ENCODE measurements at regions of chr6 and their contacts with region 1.

Region 1: GRCh38 chr6:154995284-154996015 is at the start of gene TIAM2:
- DNase-seq: peak in 1 of 2 experiments; percentile 49
- H3K4me3 ChIP-seq: peak within 1 kb of the TSS; percentile 87
- H3K4me3 Mint-ChIP-seq: peak within 1 kb of the TSS; percentile 67
- H3K27ac Mint-ChIP-seq: no peak within 1 kb of the TSS
- H3K4me1 ChIP-seq: peaks cover 28% of the 10 kb centered on the region
- H3K4me1 Mint-ChIP-seq: peaks cover 13% of the 10 kb centered on the region
- H3K27me3 ChIP-seq: no peaks in the 10 kb centered on the region
- H3K27me3 Mint-ChIP-seq: no peaks in the 10 kb centered on the region
- CTCF ChIP-seq: no peak
- total RNA-seq, gene TIAM2: 3.8 and 5.1 TPM in 2 replicates

Region 2: GRCh38 chr6:154928325-154928922 is 67.0 kb before region 1 on chr6:
- CTCF ChIA-PET with region 1: no interaction called
- POLR2A ChIA-PET with region 1: no interaction called
- intact Hi-C with region 1: loop called (anchors 2 kb)
- DNase-seq: peak; percentile 47 to 71
- H3K4me3 ChIP-seq: no peak overlapping the region
- H3K4me3 Mint-ChIP-seq: no peak overlapping the region
- H3K27ac Mint-ChIP-seq: no peak overlapping the region
- H3K4me1 ChIP-seq: peaks cover 25% of the 10 kb centered on the region
- H3K4me1 Mint-ChIP-seq: peaks cover 21% of the 10 kb centered on the region
- H3K27me3 ChIP-seq: no peaks in the 10 kb centered on the region
- H3K27me3 Mint-ChIP-seq: no peaks in the 10 kb centered on the region
- CTCF ChIP-seq: peak; percentile 74 to 77

Region 3: DNA sequence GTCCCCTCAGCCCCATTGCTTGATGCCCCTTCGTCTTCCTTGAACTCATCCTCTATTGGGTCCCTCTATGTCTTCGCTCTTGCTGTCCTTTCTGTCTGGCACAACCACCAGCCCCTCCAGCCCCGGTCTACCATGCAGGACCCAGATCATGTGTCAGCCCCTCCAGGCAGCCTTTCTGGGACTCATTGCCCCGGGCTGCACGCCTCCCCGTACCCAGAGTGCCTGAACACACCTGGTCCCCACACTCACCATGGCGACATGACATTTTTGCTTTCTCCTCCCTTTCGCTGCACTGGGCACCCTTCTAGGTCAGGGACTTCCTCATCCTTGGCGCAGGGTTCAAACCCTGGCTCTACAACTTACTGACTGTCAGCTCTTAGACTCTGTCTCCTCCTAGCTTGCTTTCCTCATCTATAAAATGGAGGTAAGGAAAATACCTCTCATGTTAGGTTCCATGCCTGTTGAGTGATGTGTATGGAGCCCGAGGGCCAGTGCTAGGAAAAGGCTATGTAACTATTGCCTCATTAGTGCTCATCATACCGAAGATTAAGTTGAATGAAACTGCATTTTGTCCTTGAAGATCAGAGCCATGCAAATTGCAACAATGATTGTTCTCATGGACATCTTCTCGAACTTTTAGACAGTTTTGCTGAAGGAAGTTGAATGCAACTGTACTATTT is 50.1 kb before region 1 on chr6:
- CTCF ChIA-PET with region 1: no interaction called
- POLR2A ChIA-PET with region 1: no interaction called
- intact Hi-C with region 1: no loop called
- DNase-seq: no peak
- H3K4me3 ChIP-seq: no peak overlapping the region
- H3K4me3 Mint-ChIP-seq: no peak overlapping the region
- H3K27ac Mint-ChIP-seq: no peak overlapping the region
- H3K4me1 ChIP-seq: no peaks in the 10 kb centered on the region
- H3K4me1 Mint-ChIP-seq: no peaks in the 10 kb centered on the region
- H3K27me3 ChIP-seq: no peaks in the 10 kb centered on the region
- H3K27me3 Mint-ChIP-seq: no peaks in the 10 kb centered on the region
- CTCF ChIP-seq: no peak

Region 4: DNA sequence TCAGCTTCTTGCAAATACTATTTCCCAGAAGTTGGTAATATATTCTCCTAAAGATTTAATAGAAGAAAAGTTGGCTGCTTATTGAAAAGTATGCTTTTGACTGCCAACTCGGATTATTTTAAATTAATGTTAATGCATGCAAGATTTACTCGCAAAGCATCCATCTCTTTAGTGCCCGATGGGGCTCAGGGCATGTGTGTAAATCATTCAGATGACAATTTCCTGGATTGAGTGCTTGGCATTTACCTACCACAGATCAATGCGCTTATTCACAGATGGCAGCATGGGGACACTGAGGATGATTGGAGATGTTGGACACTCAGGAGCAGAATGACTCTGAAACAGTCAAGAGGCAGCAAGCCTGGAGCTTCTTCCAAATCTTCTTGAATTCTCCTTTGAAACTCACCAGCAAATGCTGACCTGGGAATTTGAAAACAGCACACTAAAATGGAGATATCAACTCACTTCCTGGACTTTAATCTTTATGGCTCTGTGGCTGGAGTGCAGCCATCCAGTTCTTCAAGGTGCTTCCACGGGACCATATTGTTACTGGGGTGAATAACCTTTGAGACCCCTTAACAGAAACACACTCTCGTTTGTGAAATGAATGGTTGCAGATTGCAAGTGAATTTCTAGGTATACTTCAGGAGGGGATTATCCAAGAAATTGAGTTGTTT is 34.5 kb before region 1 on chr6:
- CTCF ChIA-PET with region 1: no interaction called
- POLR2A ChIA-PET with region 1: no interaction called
- intact Hi-C with region 1: loop called (anchors 1 kb)
- DNase-seq: no peak
- H3K4me3 ChIP-seq: no peak overlapping the region
- H3K4me3 Mint-ChIP-seq: no peak overlapping the region
- H3K27ac Mint-ChIP-seq: peak overlapping the region; percentile 46
- H3K4me1 ChIP-seq: peaks cover 37% of the 10 kb centered on the region
- H3K4me1 Mint-ChIP-seq: peaks cover 18% of the 10 kb centered on the region
- H3K27me3 ChIP-seq: no peaks in the 10 kb centered on the region
- H3K27me3 Mint-ChIP-seq: no peaks in the 10 kb centered on the region
- CTCF ChIP-seq: no peak

Region 5: DNA sequence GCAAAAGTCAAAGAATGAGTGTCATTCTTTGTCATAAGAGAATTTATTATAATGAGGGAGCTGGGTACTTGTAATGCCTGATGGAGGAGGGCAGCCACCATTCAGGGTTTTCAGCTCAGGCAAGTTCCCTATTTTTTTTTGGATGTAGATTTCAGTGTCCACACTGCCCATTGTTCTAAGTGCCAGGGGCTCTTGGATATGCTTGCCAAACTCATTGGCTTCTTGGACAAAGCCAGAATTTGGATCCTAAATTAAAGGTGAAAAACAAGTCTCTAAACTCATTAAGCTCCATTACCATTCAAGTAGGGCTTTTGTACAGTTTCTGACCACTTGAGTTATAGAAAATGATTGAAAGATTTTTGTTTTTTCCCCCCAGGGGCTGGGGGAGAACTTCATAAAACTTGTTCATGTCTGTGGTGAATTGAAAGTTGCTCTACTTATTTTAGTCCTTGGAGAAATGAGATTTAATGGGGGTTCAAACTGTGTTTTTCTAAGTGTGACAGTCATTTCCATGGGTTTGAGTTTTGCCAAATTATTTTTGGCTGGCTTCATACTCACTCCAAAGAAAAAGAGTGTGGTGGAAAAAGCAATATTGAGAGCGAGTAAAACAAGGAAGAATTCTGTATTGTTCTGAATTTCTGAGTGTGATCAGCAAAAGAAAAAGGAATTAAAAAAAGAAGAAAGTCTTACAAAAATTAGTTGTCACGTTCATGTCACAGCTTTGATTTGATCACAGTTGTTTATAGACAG is 45.6 kb after region 1 on chr6:
- CTCF ChIA-PET with region 1: no interaction called
- POLR2A ChIA-PET with region 1: interaction called, 18 read pairs
- intact Hi-C with region 1: no loop called
- DNase-seq: no peak
- H3K4me3 ChIP-seq: no peak overlapping the region
- H3K4me3 Mint-ChIP-seq: no peak overlapping the region
- H3K27ac Mint-ChIP-seq: no peak overlapping the region
- H3K4me1 ChIP-seq: no peaks in the 10 kb centered on the region
- H3K4me1 Mint-ChIP-seq: no peaks in the 10 kb centered on the region
- H3K27me3 ChIP-seq: no peaks in the 10 kb centered on the region
- H3K27me3 Mint-ChIP-seq: no peaks in the 10 kb centered on the region
- CTCF ChIP-seq: no peak

Region 6: GRCh38 chr6:155085582-155086257 is 90.3 kb after region 1 on chr6:
- CTCF ChIA-PET with region 1: no interaction called
- POLR2A ChIA-PET with region 1: no interaction called
- intact Hi-C with region 1: loop called (anchors 5 kb)
- DNase-seq: peak; percentile 64 to 83
- H3K4me3 ChIP-seq: no peak overlapping the region
- H3K4me3 Mint-ChIP-seq: peak overlapping the region; percentile 27
- H3K27ac Mint-ChIP-seq: peak overlapping the region; percentile 87
- H3K4me1 ChIP-seq: peaks cover 23% of the 10 kb centered on the region
- H3K4me1 Mint-ChIP-seq: peaks cover 11% of the 10 kb centered on the region
- H3K27me3 ChIP-seq: no peaks in the 10 kb centered on the region
- H3K27me3 Mint-ChIP-seq: no peaks in the 10 kb centered on the region
- CTCF ChIP-seq: no peak

Region 7: DNA sequence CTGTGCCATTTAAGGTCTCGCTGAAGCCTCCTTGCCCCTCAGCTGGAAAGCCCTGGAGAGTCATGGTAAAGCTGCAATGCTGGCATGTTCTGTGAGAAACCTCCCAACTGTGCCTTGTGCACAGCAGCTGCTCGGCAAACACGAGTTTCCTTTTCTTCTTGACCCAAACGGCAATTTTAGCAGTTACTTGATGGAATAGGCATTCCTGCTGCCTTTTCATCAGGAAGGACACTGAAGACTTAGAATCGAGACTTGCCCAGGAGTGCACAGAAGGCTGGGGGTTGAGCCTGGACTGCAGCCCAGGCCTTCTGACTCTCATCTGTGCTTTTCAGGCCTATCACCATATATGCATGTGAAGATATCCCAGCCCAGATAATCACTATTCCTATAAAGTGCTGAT is 239.6 kb after region 1 on chr6:
- CTCF ChIA-PET with region 1: no interaction called
- POLR2A ChIA-PET with region 1: no interaction called
- intact Hi-C with region 1: no loop called
- DNase-seq: no peak
- H3K4me3 ChIP-seq: no peak overlapping the region
- H3K4me3 Mint-ChIP-seq: no peak overlapping the region
- H3K27ac Mint-ChIP-seq: no peak overlapping the region
- H3K4me1 ChIP-seq: no peaks in the 10 kb centered on the region
- H3K4me1 Mint-ChIP-seq: no peaks in the 10 kb centered on the region
- H3K27me3 ChIP-seq: no peaks in the 10 kb centered on the region
- H3K27me3 Mint-ChIP-seq: no peaks in the 10 kb centered on the region
- CTCF ChIP-seq: no peak

Measured in Caco-2 (cell line).